Activated B cell treated with CpG ODN at 0.5 μM for 24 hours (primary cell): ENCODE measurements at regions of chr2 and their contacts with region 1.

Region 1: DNA sequence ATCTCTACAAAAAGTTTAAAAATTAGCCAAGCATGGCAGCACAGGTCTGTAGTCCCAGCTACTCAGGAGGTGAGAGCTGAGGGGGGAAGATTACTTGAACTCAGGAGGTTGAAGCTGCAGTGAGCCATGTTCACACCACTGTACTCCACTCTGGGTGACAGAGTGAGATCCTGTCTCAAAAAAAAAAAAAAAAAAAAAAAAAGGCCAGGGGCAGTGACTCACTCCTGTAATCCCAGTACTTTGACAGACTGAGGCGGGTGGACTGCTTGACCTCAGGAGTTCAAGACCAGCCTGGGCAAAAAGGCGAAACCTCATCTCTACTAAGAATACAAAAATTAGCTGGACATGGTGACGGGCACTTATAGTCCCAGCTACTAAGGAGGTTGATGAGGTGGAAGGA is 37.0 kb downstream of the PUM2 start:
- DNase-seq: no peak
- ATAC-seq: no peak
- H3K4me3 Mint-ChIP-seq: no peak overlapping the region
- H3K27ac Mint-ChIP-seq: no peak overlapping the region
- H3K4me1 Mint-ChIP-seq: peaks cover 6% of the 10 kb centered on the region
- H3K27me3 Mint-ChIP-seq: no peaks in the 10 kb centered on the region
- CTCF ChIP-seq: no peak

Region 2: DNA sequence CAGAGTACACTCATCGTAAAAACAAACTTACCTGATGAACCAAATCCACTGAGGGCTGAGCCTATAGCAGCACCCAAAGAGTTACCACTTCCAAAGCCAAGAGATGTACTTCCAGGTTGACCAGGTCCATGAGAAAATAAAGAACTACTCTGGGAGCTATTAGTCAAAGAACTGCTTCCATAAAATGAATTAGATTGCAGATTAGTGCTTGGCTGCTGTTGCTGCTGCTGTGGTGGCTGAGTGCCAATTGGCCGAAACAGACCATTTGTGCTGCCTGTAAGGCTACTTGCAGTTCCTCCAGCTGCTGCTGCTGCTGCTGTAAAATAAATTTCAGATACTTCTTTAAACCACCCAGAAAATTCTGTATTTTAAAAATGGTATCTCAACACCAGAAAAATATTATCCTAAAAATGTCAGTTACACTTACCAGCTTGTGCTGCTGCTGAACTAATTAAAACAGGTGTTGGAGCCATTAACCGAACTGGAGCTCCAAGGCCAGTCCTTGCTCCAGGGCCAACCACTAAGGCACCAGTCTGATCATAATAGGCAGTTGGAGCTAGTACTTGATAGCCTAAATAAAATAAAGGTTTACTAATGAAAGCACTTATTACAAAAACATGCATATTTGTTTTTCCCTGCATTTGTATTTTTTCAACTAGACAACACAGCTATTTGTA is 30.6 kb before region 1 on chr2:
- CTCF ChIA-PET with region 1: no interaction called
- POLR2A ChIA-PET with region 1: no interaction called
- intact Hi-C with region 1: loop called (anchors 5 kb)
- DNase-seq: no peak
- ATAC-seq: no peak
- H3K4me3 Mint-ChIP-seq: no peak overlapping the region
- H3K27ac Mint-ChIP-seq: no peak overlapping the region
- H3K4me1 Mint-ChIP-seq: no peaks in the 10 kb centered on the region
- H3K27me3 Mint-ChIP-seq: no peaks in the 10 kb centered on the region
- CTCF ChIP-seq: no peak

Region 3: DNA sequence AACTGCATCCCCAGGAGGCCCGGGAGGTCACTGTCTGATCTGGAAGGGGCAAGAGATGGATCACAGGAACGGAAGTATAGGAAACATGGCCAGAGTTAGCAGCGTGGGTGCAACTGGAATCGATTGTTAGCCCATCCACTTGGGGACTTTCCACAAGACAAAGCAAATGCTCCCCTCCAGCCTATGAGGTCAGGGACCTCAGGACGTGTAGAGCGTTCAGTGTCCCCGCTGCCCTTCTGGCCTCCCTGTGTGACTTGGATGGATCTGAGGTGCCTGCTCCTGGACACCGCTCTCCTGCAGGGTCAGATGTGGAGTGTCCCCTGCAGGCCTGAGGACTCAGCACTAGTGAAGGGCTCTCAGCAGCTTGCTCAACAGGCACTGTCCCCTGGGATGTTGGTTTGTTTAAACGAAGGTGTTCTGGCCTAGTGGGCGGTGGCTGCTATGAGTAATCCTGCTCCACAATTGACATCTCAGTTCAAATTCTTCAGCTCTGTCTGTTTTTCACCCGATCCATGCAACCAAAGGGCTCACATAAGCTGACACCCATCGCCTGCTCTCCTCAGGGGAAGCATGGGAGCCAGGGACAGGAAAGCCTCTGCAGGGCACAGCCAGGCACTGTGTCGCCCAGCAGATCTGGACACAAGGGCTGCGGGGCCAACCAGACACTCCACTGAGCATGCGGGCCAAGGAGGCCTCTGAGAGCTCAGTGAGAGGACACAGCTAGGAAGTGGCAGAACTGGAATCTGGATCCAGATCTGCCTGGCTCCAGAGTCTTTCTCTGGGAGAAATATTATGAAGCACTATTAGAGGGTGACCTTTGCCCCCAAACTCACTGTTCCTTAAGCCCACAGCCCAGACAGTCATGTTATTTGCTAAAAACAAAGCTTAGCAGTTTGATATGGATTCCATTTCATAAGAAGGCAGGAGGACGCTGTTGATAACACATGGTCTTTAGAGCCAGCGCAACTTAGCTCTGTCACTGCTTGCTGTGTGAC is 211.7 kb after region 1 on chr2:
- CTCF ChIA-PET with region 1: no interaction called
- POLR2A ChIA-PET with region 1: no interaction called
- intact Hi-C with region 1: no loop called
- DNase-seq: peak; percentile 40
- ATAC-seq: peak; percentile 94
- H3K4me3 Mint-ChIP-seq: peak overlapping the region; percentile 76
- H3K27ac Mint-ChIP-seq: peak overlapping the region; percentile 41
- H3K4me1 Mint-ChIP-seq: peaks cover 21% of the 10 kb centered on the region
- H3K27me3 Mint-ChIP-seq: no peaks in the 10 kb centered on the region
- CTCF ChIP-seq: no peak

Region 4: GRCh38 chr2:20737505-20737904 is 423.8 kb after region 1 on chr2:
- CTCF ChIA-PET with region 1: no interaction called
- POLR2A ChIA-PET with region 1: no interaction called
- intact Hi-C with region 1: no loop called
- DNase-seq: no peak
- ATAC-seq: no peak
- H3K4me3 Mint-ChIP-seq: peak overlapping the region; percentile 52
- H3K27ac Mint-ChIP-seq: peak overlapping the region; percentile 18
- H3K4me1 Mint-ChIP-seq: peaks cover 24% of the 10 kb centered on the region
- H3K27me3 Mint-ChIP-seq: no peaks in the 10 kb centered on the region
- CTCF ChIP-seq: no peak